ENCODE measurements at regions of chr2 and their contacts with region 1.

Region 1: DNA sequence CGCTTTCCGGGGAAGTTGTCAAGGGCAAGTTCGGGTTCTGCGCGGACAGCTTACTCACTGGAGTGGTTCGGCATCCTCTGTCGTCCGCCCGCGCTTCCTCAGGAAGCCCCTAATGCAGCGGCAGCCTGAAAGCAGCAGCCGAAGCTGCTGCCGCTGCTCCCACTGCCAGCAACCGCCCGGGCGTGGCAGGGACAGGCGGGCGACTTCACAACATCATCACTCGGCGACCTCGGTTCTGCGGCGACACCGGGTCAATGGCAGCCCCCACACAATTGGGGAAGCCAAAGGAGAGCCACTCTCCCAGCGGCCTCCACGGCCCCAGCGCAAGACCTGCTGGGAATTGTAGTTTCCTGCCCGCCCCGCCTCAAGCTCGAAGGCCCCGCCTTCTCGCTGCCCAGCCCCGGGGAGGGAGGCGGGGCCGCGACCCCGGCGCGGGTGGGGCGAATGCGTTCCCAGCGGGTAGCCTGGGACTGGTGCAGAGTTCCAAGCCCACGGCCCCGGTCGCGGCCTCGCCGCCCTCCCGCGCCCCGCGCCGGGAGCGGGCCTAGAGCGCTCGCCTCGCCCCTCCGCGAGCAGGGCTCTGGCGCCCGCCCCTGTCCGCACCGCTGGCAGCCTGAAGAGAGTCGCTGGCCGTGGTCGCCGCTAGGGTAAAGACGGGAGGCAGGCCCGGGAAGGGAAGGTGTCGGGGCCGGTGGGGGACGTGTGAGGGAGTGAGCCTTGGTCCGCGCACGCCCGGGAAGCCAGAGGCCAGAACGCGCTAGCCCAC is at the starts of genes STRADB and TRAK2:
- DNase-seq: peak; percentile 95
- H3K4me3 Mint-ChIP-seq: peak within 1 kb of the TSS; percentile 92
- H3K27ac Mint-ChIP-seq: peak within 1 kb of the TSS; percentile 91
- H3K4me1 Mint-ChIP-seq: peaks cover 46% of the 10 kb centered on the region
- H3K27me3 Mint-ChIP-seq: peaks cover 8% of the 10 kb centered on the region
- total RNA-seq, gene STRADB: 20.7 and 23.1 TPM in 2 replicates
- total RNA-seq, gene TRAK2: 27.1 and 27.7 TPM in 2 replicates

Region 2: DNA sequence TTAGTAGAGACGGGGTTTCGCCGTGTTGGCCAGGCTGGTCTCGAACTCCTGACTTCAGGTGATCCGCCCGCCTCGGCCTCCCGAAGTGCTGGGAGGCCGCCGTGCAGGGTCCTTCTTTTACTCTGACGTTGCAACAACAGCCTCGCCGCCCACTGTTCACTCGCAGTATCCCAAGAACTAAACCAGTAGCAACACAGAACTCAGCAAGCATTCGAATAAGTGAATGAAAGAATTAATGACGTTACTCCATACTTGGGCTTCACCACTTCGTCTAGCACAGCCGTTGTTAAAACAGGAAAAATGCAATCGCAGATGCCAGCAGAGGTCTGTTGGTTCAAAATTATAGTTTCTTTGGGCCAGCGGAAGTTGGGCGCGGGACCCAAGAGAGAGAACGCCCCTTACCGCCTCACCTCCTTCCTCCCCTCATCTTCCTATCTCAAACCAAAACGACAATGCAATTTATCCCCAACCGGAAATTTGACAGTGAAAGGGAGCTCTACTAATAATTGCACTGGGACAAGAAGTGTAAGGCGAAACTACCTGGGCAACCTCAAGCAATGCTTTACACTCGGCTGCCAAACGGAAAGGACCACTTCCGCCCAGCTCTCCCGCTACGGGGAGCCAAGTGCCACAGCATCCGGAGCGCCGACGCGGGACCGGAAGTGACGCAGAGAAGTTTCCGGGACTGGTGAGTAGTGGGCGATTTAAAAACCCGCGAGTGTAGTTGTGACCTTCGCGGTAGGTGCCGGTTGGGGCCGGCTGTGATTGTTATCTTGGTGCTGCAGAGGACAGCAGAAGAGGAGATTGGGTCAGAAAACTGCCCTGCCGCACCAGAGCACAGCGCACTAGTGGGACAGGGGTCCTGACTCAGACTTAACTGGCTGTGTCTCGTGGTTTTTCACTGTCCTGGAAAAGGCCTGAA is 562.5 kb before region 1 on chr2 and contains the starts of genes NIF3L1 and PPIL3:
- intact Hi-C with region 1: loop called (anchors 1 kb)
- DNase-seq: peak; percentile 97
- H3K4me3 Mint-ChIP-seq: peak within 1 kb of the TSS; percentile 95
- H3K27ac Mint-ChIP-seq: peak within 1 kb of the TSS; percentile 100
- H3K4me1 Mint-ChIP-seq: peaks cover 45% of the 10 kb centered on the region
- H3K27me3 Mint-ChIP-seq: no peaks in the 10 kb centered on the region
- total RNA-seq, gene NIF3L1: 23.9 and 24.8 TPM in 2 replicates
- total RNA-seq, gene PPIL3: 55.4 and 57.8 TPM in 2 replicates

Region 3: DNA sequence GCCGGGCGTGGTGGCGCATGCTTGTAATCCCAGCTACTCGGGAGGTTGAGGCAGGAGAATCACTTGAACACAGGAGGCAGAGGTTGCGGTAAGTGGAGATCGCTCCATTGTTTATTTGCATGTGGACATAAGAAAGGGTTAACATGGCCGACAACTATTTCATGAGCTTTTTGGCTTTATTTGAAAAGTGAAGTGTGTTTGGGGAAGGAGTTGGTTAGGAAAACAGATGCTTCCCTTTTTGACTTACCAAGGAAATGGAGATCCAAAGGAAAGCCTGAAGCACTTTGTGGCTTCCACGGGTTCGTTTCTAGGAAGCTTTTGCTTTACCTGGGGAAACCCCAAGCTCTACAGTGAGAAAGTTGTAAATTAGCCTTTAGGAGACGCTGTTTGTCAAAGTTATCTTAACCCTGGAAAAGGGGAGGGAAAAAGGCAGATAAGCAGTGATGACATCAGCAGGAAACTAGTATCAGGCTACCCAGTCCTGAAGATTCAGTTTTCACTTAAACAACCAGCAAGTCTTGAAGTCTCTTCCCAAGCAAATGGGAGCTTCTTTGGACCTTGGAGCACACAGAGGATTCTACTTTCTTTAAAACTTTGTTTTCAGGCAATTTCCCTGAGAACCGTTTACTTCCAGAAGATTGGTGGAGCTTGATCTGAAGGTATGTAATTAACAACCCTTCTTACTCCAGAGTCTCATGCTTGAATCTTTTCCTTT is 268.7 kb before region 1 on chr2 and contains the start of gene CASP10:
- intact Hi-C with region 1: loop called (anchors 5 kb)
- DNase-seq: peak; percentile 32
- H3K4me3 Mint-ChIP-seq: peak within 1 kb of the TSS; percentile 96
- H3K27ac Mint-ChIP-seq: peak within 1 kb of the TSS; percentile 93
- H3K4me1 Mint-ChIP-seq: peaks cover 43% of the 10 kb centered on the region
- H3K27me3 Mint-ChIP-seq: no peaks in the 10 kb centered on the region
- total RNA-seq, gene CASP10: 14.3 and 17.3 TPM in 2 replicates

Region 4: GRCh38 chr2:201327678-201328077 is 123.8 kb before region 1 on chr2:
- intact Hi-C with region 1: no loop called
- DNase-seq: no peak
- H3K4me3 Mint-ChIP-seq: no peak overlapping the region
- H3K27ac Mint-ChIP-seq: no peak overlapping the region
- H3K4me1 Mint-ChIP-seq: no peaks in the 10 kb centered on the region
- H3K27me3 Mint-ChIP-seq: no peaks in the 10 kb centered on the region

Region 5: GRCh38 chr2:201406077-201406662 is 45.3 kb before region 1 on chr2:
- intact Hi-C with region 1: loop called (anchors 2 kb)
- DNase-seq: no peak
- H3K4me3 Mint-ChIP-seq: no peak overlapping the region
- H3K27ac Mint-ChIP-seq: peak overlapping the region; percentile 20
- H3K4me1 Mint-ChIP-seq: peaks cover 32% of the 10 kb centered on the region
- H3K27me3 Mint-ChIP-seq: no peaks in the 10 kb centered on the region

Region 6: GRCh38 chr2:201432038-201432620 is 19.3 kb before region 1 on chr2:
- intact Hi-C with region 1: loop called (anchors 1 kb)
- DNase-seq: no peak
- H3K4me3 Mint-ChIP-seq: peak overlapping the region; percentile 52
- H3K27ac Mint-ChIP-seq: peak overlapping the region; percentile 83
- H3K4me1 Mint-ChIP-seq: peaks cover 34% of the 10 kb centered on the region
- H3K27me3 Mint-ChIP-seq: no peaks in the 10 kb centered on the region

Region 7: DNA sequence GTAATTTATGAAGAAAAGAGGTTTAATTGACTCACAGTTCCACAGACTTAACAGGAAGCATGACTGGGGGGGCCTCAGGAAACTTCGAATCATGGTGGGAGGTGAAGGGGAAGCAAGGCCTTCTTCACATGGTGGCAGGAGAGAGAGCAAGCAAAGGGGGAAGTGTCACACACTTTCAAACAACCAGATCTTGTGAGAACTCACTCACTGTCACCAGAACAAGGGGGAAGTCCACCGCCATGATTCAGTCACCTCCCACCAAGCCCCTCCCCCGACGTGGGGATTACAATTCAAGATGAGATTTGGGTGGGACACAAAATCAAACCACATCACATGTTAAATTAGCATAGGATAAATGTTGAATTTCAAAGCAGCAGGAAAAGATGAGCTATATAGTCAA is 56.2 kb after region 1 on chr2:
- intact Hi-C with region 1: no loop called
- DNase-seq: no peak
- H3K4me3 Mint-ChIP-seq: no peak overlapping the region
- H3K27ac Mint-ChIP-seq: no peak overlapping the region
- H3K4me1 Mint-ChIP-seq: no peaks in the 10 kb centered on the region
- H3K27me3 Mint-ChIP-seq: peaks cover 2% of the 10 kb centered on the region

Region 8: DNA sequence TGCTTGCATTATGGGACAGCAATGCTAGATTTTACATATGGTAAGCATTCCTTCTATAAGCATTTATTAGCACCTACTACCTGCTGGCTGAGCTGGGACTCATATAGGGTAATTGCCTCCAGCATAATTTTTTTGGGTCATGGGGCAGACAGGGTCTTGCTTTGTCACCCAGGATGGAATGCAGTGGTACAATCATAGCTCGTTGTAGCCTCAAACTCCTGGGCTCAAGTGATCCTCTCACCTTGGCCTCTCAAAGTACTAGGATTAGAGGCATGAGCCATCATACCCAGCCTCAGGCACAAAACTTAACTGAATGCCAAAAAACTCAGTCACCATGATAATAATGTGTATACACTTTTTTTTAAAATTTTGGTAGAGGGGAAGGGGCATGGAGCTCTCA is 156.5 kb after region 1 on chr2:
- intact Hi-C with region 1: no loop called
- DNase-seq: no peak
- H3K4me3 Mint-ChIP-seq: no peak overlapping the region
- H3K27ac Mint-ChIP-seq: no peak overlapping the region
- H3K4me1 Mint-ChIP-seq: no peaks in the 10 kb centered on the region
- H3K27me3 Mint-ChIP-seq: peaks cover 27% of the 10 kb centered on the region

Region 9: DNA sequence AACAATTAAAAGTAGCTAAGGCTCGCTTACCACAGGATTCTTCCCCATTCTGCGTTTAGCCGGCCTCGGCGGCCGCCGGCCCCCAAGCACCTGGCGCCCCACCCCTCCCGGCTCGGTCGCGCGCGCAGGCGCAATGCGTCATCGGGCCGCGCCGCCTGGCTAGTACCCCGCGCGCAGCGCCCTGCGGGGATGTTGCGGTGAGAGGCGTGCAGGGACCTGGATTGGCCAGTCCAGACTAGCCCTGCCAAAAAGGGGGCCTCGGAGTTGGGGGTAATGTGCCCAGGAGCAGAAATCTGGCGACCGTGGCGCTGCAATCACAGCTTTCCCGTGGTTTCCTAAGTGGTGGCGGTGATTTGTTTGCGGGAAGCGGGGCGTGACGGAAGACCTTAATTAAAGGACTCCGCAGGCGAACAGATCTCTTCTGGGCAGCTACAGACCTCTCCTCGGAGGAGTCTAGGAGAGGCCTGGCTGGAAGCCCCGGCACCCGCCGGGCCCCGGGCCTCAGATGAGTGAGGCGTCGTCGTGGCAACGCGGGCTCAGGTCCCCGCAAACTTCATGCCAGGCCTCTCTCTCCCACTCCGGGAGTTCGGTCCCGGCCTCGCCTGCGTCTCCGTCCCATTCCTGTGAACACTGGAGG is 191.2 kb after region 1 on chr2:
- intact Hi-C with region 1: loop called (anchors 1 kb)
- DNase-seq: peak; percentile 85
- H3K4me3 Mint-ChIP-seq: peak overlapping the region; percentile 87
- H3K27ac Mint-ChIP-seq: peak overlapping the region; percentile 91
- H3K4me1 Mint-ChIP-seq: peaks cover 15% of the 10 kb centered on the region
- H3K27me3 Mint-ChIP-seq: peaks cover 1% of the 10 kb centered on the region

Region 10: DNA sequence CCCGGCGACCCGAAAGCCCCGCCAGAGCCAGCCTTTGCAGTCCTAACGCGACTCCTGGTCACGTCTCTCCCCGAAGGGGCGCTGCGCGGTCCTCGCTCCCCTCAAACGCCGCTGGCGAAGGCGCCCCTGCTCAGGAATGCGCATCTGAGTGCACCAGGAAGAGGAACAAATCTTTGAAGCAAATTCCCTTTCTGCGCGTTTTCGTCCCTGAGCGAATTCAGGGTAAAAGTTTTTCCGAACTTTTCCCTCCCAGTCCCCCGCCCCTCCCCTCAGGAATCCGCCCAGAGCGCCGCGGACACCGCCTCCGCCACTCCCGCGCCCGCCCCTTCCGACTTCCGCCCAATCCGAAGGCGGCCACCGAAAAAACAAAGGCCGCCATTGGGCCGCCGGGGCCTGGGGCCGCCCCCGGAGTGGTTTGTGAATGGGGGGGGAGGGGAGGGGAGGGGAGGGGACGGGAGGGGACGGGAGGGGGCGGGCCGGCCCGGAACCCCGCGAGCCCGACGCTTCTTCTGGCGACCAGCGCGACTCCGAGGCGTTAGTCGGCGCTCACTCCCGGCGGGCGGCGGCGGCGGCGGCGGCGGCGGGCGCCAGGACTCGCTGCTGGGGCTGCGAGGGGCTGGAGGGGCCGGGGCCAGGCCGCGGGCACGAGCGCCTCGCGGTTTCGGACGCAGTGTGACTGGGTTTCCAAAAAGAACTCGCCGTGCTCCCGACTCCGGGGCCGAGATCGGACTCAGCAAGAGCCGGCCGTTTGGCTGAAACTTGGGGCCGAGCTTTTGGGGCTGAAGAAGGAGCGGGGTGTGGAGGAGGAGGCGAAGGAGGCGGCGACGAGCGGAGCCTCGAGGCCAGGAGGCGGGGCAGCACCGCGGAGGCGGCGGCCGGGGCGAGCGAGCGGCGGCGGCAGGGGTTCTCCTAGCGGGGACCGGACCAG is 582.1 kb after region 1 on chr2 and contains the start of gene FZD7:
- intact Hi-C with region 1: loop called (anchors 5 kb)
- DNase-seq: peak; percentile 79
- H3K4me3 Mint-ChIP-seq: peak within 1 kb of the TSS; percentile 83
- H3K27ac Mint-ChIP-seq: no peak within 1 kb of the TSS
- H3K4me1 Mint-ChIP-seq: peaks cover 11% of the 10 kb centered on the region
- H3K27me3 Mint-ChIP-seq: peaks cover 50% of the 10 kb centered on the region
- total RNA-seq, gene FZD7: 1.1 and 1.4 TPM in 2 replicates

Measured in activated T-helper 2 cell treated with anti-CD3 and anti-CD28 coated beads, Interferon-gamma antibody, Interleukin-2, Interleukin-4, amounts not matched to agents 10 μg/mL and 5 μg/mL and 100 μg/mL, durations not matched to agents 14 hours and 24 hours and 36 hours (primary cell).